Activated T-helper 1 cell treated with anti-CD3 and anti-CD28 coated beads, Interleukin-12 subunit alpha, Interleukin-12 subunit beta, Interleukin-2, Interleukin-4 antibody, amounts not matched to agents 30 ng/mL and 10 ng/mL and 1 ng/mL, durations not matched to agents 14 hours and 24 hours and 36 hours (primary cell): ENCODE measurements at regions of chr3 and their contacts with region 1.

Region 1: DNA sequence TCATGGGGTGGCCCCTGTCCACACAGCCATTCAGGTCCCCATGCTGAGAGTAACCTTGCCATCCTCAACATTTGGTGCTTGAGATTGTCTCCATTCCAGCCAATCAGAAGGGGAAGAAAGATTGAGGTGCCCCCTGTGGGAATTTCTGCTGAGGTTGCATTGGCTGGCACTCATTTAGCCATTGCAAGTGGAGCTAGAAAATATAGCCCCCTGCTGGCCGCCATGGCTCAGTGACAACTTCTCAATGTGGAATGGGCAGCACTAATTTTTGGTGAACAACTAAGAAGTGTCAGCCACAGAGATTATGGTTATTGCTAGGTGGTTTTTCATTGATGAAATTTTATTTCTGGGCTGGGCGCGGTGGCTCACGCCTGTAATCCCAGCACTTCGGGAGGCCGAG is 22.0 kb downstream of the COL6A6 start:
- DNase-seq: no peak
- H3K4me3 Mint-ChIP-seq: no peak overlapping the region
- H3K27ac Mint-ChIP-seq: no peak overlapping the region
- H3K4me1 Mint-ChIP-seq: no peaks in the 10 kb centered on the region
- H3K27me3 Mint-ChIP-seq: peaks cover 3% of the 10 kb centered on the region

Region 2: GRCh38 chr3:130276203-130276803 is 262.7 kb before region 1 on chr3:
- intact Hi-C with region 1: loop called (anchors 1 kb)
- DNase-seq: no peak
- H3K4me3 Mint-ChIP-seq: no peak overlapping the region
- H3K27ac Mint-ChIP-seq: no peak overlapping the region
- H3K4me1 Mint-ChIP-seq: no peaks in the 10 kb centered on the region
- H3K27me3 Mint-ChIP-seq: peaks cover 2% of the 10 kb centered on the region